ENCODE measurements at regions of chr3 and their contacts with region 1.

Region 1: DNA sequence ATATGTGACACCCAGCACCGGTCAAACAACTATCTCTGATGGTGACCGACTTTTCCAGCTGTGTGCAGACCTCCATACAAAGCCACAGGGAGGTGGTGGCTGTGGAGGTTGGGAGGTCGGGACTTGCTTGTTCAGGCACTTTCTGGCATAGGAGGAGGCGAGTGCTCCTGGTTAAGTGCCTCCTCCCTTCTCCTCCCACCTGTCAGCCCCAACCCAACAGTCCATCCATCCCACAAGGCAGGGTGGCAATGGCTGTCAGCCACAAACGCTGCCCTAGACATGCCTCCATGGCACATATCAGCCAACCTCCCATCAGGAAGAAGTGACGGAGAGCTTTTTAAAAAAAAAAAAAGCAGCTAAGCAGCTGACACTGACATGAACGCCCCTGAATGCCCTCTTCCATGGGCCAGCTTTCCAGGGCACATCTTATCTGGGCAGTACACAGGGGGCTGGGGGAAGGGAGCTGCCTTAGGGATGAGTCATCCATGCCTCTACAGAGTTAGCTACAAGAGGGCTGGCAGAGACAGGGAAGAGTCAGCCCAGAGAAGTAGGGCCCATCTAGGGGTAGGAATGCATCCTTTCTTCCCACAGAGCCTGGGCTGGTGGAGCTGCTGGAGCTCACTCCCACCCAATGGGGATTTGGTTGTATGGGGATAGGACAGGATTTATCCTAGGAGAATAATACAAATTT is 41.2 kb downstream of the CCDC12 start:
- DNase-seq: peak; percentile 89
- H3K4me3 ChIP-seq: no peak overlapping the region
- CTCF ChIP-seq: peak; percentile 89

Region 2: GRCh38 chr3:46748170-46748569 is 187.1 kb before region 1 on chr3:
- CTCF ChIA-PET with region 1: no interaction called
- POLR2A ChIA-PET with region 1: no interaction called
- DNase-seq: no peak
- H3K4me3 ChIP-seq: no peak overlapping the region
- CTCF ChIP-seq: no peak

Region 3: DNA sequence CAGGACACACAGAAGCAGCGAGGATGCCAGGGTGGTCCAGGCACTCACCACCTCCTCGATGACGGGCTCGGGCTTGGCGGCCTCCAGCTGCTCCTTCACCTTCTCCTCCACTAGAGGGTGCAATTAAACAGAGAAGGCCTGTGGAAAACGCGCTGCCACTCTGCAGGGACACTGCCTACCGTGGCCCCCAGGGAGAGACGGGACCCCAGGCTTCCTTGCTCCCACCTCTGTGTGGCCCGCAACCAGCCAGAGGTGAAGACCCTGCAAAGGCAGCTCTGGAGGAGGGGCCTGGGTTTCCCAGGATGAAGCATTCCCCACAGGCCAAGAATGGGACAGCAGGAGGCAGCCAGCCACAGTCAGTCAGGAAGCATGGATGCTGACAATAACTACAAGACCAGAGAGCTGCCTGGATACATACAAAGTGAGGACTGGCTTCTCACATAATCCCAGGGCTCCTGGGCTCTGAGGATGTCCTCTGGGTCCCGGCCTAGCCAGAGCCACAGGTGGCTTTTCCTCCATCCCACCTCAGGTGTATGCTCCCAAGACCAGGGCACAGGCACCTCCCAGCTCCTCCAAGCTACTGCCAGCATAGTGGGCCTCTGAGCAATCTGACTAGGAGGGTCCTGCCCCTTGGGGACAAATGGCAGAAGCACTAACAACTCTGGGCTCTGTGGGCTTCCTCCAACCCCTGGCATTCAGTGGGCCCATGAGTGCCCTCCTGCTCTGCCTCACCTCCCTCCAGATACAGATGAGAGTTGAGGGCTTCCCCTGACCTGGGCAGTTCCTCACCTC is 11.6 kb before region 1 on chr3:
- CTCF ChIA-PET with region 1: interaction called, 130 read pairs
- POLR2A ChIA-PET with region 1: no interaction called
- DNase-seq: no peak
- H3K4me3 ChIP-seq: no peak overlapping the region
- CTCF ChIP-seq: peak; percentile 61

Region 4: DNA sequence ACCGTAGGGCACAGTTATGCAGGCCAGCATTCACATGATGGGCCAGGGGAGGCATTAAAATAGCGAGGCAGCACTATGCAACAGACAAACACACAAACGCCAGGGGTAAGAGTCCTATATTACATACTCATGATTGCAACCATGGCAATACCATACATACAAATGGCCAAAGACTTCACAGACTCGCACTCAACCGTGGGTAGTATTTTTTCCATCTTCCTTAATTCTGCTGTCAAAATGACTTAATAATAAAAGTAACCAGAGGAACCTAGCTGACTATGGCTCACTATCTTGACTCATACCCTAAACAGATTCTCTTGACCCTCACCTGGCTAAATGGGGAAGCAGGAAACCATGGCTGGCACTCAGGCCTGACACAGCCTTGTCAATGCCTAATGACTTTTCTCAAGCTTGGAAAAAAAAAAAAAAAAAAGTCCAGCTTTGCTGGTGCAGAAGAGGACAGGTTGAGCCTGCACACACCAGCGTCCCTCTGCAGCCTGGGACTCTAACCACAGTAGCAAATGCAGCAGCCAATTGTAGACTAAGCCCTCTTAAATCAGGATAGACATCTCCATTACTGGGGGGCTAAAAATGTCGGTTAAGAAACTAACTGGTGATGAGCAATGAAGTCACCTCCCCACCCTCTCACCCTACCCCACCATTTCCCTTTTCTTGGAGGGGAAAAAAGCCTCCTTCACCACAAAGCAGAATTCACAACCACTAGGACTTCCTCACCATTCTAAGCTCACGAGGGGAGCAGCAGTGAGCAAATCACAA is 18.1 kb after region 1 on chr3:
- CTCF ChIA-PET with region 1: interaction called, 59 read pairs
- POLR2A ChIA-PET with region 1: interaction called, 3 read pairs
- DNase-seq: no peak
- H3K4me3 ChIP-seq: no peak overlapping the region
- CTCF ChIP-seq: no peak

Region 5: GRCh38 chr3:46979151-46979978 is 44.1 kb after region 1 on chr3 and contains the start of gene NBEAL2:
- CTCF ChIA-PET with region 1: interaction called, 11 read pairs
- POLR2A ChIA-PET with region 1: interaction called, 3 read pairs
- DNase-seq: peak; percentile 28
- H3K4me3 ChIP-seq: peak within 1 kb of the TSS; percentile 76
- CTCF ChIP-seq: no peak

Measured in AG04449 (cell line).